Activated naive CD4-positive, alpha-beta T cell treated with anti-CD3 and anti-CD28 coated beads, Interleukin-2, amount 10 ng/mL, durations not matched to agents 7 days and 5 days (primary cell): ENCODE measurements at regions of chr3 and their contacts with region 1.

Region 1: DNA sequence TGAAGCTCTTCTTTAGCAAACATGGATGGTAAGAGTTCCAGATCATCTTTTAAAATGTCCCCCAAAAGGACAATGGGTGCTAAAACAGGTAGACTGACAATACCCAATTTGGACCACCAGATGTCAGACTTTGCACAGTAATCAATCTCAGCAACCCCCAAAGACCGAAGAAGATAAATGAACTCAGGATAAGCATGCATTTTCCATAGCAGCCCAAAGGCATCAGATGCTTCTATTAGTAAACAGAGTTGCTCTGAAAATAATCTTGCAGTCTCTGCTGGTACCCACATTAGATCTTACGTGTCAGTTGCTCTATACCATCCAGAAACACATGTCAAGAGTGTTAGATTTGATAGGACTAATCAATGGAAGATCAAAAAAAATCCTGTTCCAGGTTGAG is 20.6 kb downstream of the MYH15 start:
- DNase-seq: peak; percentile 46
- H3K4me3 Mint-ChIP-seq: no peak overlapping the region
- H3K27ac Mint-ChIP-seq: no peak overlapping the region
- H3K4me1 Mint-ChIP-seq: peaks cover 2% of the 10 kb centered on the region
- H3K27me3 Mint-ChIP-seq: peaks cover 11% of the 10 kb centered on the region

Region 2: GRCh38 chr3:108477511-108478147 is 12.1 kb before region 1 on chr3:
- CTCF ChIA-PET with region 1: interaction called, 16 read pairs
- DNase-seq: peak; percentile 74
- H3K4me3 Mint-ChIP-seq: no peak overlapping the region
- H3K27ac Mint-ChIP-seq: no peak overlapping the region
- H3K4me1 Mint-ChIP-seq: peaks cover 7% of the 10 kb centered on the region
- H3K27me3 Mint-ChIP-seq: peaks cover under 1% of the 10 kb centered on the region

Region 3: DNA sequence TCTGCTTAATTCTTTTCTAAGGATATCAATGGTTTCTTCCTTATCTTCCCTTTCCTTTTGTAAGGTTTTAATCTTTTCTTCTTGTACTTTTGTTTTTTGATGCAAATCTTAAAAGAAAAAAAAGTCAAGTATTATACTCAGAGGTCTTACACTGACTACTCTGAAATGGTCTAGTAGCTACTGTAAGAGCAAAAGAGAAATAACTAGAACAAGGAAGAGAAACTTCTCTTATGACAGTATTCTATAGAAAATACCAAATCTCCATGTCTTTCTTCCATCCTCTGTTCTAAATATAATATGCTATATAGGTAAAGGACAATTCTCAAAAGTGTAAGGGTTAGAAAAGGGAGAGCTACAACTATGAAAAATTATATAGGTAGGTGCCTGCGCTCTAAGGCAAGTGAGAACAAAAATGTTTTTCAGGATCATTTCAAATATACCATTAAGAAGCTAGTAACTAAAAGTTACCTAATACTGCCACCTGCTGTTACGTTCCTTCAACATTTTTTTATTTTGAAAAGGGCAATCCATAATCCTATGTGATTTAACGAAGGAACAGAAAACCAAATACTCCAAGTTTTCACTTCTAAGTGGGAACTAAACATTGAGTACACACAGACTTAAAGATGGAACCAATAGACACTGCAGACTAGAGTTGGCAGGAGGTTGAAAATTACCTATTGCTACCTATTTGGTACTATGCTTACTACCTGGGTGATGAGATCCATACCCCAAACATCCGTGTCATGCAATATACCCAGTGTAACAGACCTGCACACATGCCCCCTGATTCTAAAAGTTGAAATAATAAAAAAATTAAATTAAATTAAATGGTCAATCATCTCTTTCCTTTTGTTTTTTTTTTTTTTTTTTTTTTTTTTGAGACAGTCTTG is 62.7 kb after region 1 on chr3:
- CTCF ChIA-PET with region 1: interaction called, 33 read pairs
- DNase-seq: no peak
- H3K4me3 Mint-ChIP-seq: no peak overlapping the region
- H3K27ac Mint-ChIP-seq: peak overlapping the region; percentile 69
- H3K4me1 Mint-ChIP-seq: no peaks in the 10 kb centered on the region
- H3K27me3 Mint-ChIP-seq: no peaks in the 10 kb centered on the region

Region 4: DNA sequence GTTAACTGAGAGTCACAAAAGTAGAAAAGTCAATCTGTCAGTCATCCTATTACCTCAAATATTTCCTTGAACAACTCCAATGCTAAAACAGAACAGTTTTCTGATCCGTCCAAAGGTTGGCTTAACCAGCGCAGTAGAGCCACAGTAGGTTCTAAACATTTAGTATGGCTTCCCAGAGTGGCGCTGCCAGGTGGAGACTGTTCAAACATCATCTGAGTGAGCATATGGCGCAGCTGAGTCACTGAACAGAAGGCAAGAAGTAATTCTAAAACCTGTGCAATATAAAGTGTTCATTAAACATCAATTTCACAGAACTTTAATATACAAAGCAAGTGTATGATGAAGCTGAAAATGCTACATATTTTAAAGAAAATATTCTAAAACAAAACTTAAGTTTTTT is 79.6 kb after region 1 on chr3:
- CTCF ChIA-PET with region 1: no interaction called
- DNase-seq: no peak
- H3K4me3 Mint-ChIP-seq: no peak overlapping the region
- H3K27ac Mint-ChIP-seq: peak overlapping the region; percentile 67
- H3K4me1 Mint-ChIP-seq: no peaks in the 10 kb centered on the region
- H3K27me3 Mint-ChIP-seq: no peaks in the 10 kb centered on the region